Left cardiac atrium (tissue), 4 donors: ENCODE measurements at regions of chr2 and their contacts with region 1.

Region 1: GRCh38 chr2:219524817-219525216 is 10.5 kb downstream of the ASIC4 start:
- DNase-seq: no peak
- ATAC-seq: no peak

Region 2: GRCh38 chr2:219416235-219416602 is 108.6 kb before region 1 on chr2:
- intact Hi-C with region 1: no loop called
- DNase-seq: no peak
- ATAC-seq: no peak

Region 3: DNA sequence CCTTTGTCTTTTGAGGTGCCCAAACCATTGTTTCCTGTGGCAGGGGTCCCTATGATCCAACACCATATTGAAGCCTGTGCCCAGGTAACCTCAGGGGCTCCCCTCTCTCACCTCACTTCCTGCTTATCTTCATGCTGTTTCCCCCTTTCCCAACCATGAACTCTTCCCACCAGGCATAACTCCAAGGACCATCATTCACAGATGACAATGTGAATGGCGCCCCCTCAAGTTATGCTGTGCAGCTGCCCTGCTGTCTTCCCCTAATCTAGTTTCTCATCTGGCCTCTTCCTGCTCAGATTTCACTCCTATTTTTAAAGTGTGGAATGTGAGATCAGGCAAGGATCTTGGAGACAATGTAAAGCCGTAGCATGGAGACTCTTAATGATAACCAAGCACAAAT is 24.7 kb before region 1 on chr2:
- intact Hi-C with region 1: loop called in 1 of 2 experiments (anchors 1 kb)
- DNase-seq: no peak
- ATAC-seq: no peak